Heart right ventricle (tissue), 16 donors: ENCODE measurements at regions of chr7 and their contacts with region 1.

Region 1: GRCh38 chr7:35801392-35802101 is 690 bp downstream of the SEPTIN7 start:
- DNase-seq: peak; percentile 70 to 77
- ATAC-seq: peak; percentile 23 to 72 (median 46)
- H3K4me3 ChIP-seq: peak overlapping the region; percentile 71 to 99 (median 88)
- H3K27ac ChIP-seq: peak overlapping the region; percentile 87 to 98 (median 97)
- H3K4me1 ChIP-seq: peaks cover 0 to 60% (median 45%) of the 10 kb centered on the region in 9 donors
- H3K27me3 ChIP-seq: no peaks in the 10 kb centered on the region
- CTCF ChIP-seq: peak; percentile 16 to 79 (median 64)

Region 2: DNA sequence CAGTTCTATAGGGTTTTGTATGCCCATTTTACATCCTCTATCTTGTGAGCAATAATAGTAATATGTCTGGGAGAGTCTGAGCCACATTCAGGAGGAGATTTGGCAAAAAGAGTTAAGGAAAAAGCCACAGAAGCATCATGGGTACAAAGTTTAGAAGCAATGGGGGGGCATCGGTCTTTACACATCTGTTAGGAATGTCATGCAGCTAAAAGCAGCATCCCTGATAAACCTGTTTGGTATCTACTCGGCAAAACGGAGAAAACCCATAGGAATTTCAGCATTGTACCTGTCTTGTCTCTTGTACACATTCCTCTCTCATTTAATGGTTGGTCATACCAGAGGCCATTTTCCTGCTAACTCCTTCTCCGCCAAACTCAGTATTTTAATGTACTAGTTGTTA is 94.1 kb before region 1 on chr7:
- intact Hi-C with region 1: loop called in 5 of 10 experiments (anchors 1 to 10 kb)
- DNase-seq: no peak
- ATAC-seq: no peak
- H3K4me3 ChIP-seq: no peak overlapping the region
- H3K27ac ChIP-seq: no peak overlapping the region
- H3K4me1 ChIP-seq: peaks cover 0 to 15% (median 8%) of the 10 kb centered on the region in 9 donors
- H3K27me3 ChIP-seq: no peaks in the 10 kb centered on the region
- CTCF ChIP-seq: no peak

Region 3: GRCh38 chr7:35729061-35729783 is 72.3 kb before region 1 on chr7:
- intact Hi-C with region 1: loop called in 1 of 10 experiments (anchors 5 kb)
- DNase-seq: no peak
- ATAC-seq: peak; percentile 8 to 65 (median 50)
- H3K4me3 ChIP-seq: no peak overlapping the region
- H3K27ac ChIP-seq: peak overlapping the region; percentile 73 to 92 (median 84)
- H3K4me1 ChIP-seq: peaks cover 0 to 51% (median 31%) of the 10 kb centered on the region in 9 donors
- H3K27me3 ChIP-seq: no peaks in the 10 kb centered on the region
- CTCF ChIP-seq: no peak

Region 4: GRCh38 chr7:35839860-35840854 is 38.6 kb after region 1 on chr7:
- intact Hi-C with region 1: loop called in 1 of 10 experiments (anchors 5 kb)
- DNase-seq: no peak
- ATAC-seq: no peak
- H3K4me3 ChIP-seq: no peak overlapping the region
- H3K27ac ChIP-seq: no peak overlapping the region
- H3K4me1 ChIP-seq: peaks cover 0 to 28% (median 3%) of the 10 kb centered on the region in 9 donors
- H3K27me3 ChIP-seq: no peaks in the 10 kb centered on the region
- CTCF ChIP-seq: no peak

Region 5: GRCh38 chr7:35906191-35906908 is 104.8 kb after region 1 on chr7:
- intact Hi-C with region 1: loop called in 7 of 10 experiments (anchors 5 to 10 kb)
- DNase-seq: peak in 1 of 2 donors; percentile 75
- ATAC-seq: peak; percentile 80 to 93 (median 90)
- H3K4me3 ChIP-seq: no peak overlapping the region
- H3K27ac ChIP-seq: peak overlapping the region in 3 of 10 donors; percentile 9 to 17 (median 11)
- H3K4me1 ChIP-seq: peaks cover 0 to 26% (median 3%) of the 10 kb centered on the region in 9 donors
- H3K27me3 ChIP-seq: no peaks in the 10 kb centered on the region
- CTCF ChIP-seq: peak; percentile 88 to 98 (median 91)